CD8-positive, alpha-beta T cell (primary cell): ENCODE measurements at regions of chr11 and their contacts with region 1.

Region 1: GRCh38 chr11:130069684-130070108 is at the start of gene APLP2:
- DNase-seq: peak; percentile 94 to 99 (median 97)
- ATAC-seq: peak; percentile 93
- H3K4me3 ChIP-seq: peak within 1 kb of the TSS; percentile 77 to 88
- H3K4me3 Mint-ChIP-seq: peak within 1 kb of the TSS; percentile 97
- H3K27ac ChIP-seq: peak within 1 kb of the TSS; percentile 74 to 80
- H3K27ac Mint-ChIP-seq: peak within 1 kb of the TSS; percentile 95
- H3K4me1 ChIP-seq: peaks cover 17% of the 10 kb centered on the region
- H3K4me1 Mint-ChIP-seq: peaks cover 18% of the 10 kb centered on the region
- H3K27me3 ChIP-seq: no peaks in the 10 kb centered on the region
- H3K27me3 Mint-ChIP-seq: peaks cover 4% of the 10 kb centered on the region
- CTCF ChIP-seq: no peak
- total RNA-seq, gene APLP2: 23.2 to 24.7 TPM

Region 2: DNA sequence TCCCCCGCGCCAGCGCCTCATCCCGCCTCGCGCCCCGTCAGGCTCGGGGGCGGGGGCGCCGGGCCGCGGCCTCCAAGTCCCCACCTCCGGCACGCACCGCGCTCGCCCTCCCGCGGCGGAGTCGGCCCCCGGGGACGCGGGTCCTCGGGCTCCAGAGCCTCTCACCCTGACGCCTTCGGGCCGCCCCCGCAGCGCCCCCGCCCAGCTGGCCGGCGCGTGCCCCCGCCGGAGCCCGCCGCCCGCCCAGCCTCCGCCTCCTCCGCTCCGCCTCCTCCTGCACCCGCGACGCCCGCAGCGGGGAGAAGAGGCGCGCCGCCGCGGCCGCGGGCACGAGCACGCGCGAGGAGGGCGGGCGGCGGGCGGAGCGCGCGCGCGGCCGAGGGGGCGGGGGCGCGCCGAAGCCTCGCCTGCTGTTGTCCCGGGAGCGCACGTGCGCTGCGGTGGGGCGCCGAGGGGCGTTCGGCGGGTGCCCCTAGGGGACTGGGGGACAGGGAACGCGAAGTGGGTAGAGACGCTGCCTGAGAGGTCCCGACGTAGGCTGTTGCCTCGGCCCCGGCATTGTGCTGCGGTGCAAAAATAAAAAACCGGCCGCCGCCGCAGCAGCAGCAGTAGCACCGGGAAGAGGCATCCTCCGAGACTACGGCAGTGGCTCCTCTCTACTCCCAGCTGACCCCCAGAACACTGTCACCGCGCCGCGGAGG is 790.2 kb before region 1 on chr11:
- CTCF ChIA-PET with region 1: no interaction called
- POLR2A ChIA-PET with region 1: no interaction called
- intact Hi-C with region 1: loop called in 1 of 2 experiments (anchors 10 kb)
- DNase-seq: peak; percentile 48 to 88 (median 75)
- ATAC-seq: peak; percentile 78
- H3K4me3 ChIP-seq: peak overlapping the region; percentile 62 to 64
- H3K4me3 Mint-ChIP-seq: peak overlapping the region; percentile 72
- H3K27ac ChIP-seq: peak overlapping the region in 1 of 2 experiments; percentile 46
- H3K27ac Mint-ChIP-seq: peak overlapping the region; percentile 49
- H3K4me1 ChIP-seq: peaks cover 14% of the 10 kb centered on the region
- H3K4me1 Mint-ChIP-seq: peaks cover 29% of the 10 kb centered on the region
- H3K27me3 ChIP-seq: peaks cover 0 to 5% of the 10 kb centered on the region in 2 experiments
- H3K27me3 Mint-ChIP-seq: peaks cover 15% of the 10 kb centered on the region
- CTCF ChIP-seq: no peak

Region 3: DNA sequence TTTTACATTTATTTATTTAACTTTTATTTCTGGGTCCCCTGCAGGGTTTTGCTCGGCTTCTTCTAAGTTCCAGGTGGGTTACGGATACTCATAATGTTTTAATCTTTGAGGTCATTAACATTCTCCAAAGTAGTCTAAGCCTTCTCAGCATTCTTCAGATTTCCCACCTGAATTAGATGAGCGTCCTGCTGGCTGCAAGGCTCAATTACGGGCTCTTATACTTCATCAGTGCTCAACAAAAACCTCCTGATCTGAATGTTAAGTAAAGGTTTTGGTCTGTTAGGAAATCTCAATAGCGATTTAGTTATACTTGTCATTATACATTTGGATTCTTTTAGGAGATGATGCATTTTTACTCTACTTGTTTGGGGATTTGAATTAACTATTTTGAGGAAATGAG is 147.0 kb before region 1 on chr11:
- CTCF ChIA-PET with region 1: interaction called, 3 read pairs
- POLR2A ChIA-PET with region 1: no interaction called
- intact Hi-C with region 1: loop called in 1 of 2 experiments (anchors 1 kb)
- DNase-seq: no peak
- ATAC-seq: no peak
- H3K4me3 ChIP-seq: no peak overlapping the region
- H3K4me3 Mint-ChIP-seq: no peak overlapping the region
- H3K27ac ChIP-seq: no peak overlapping the region
- H3K27ac Mint-ChIP-seq: no peak overlapping the region
- H3K4me1 ChIP-seq: peaks cover 5% of the 10 kb centered on the region
- H3K4me1 Mint-ChIP-seq: peaks cover 6% of the 10 kb centered on the region
- H3K27me3 ChIP-seq: peaks cover 0 to 3% of the 10 kb centered on the region in 2 experiments
- H3K27me3 Mint-ChIP-seq: no peaks in the 10 kb centered on the region
- CTCF ChIP-seq: no peak

Region 4: GRCh38 chr11:130002846-130003716 is 66.6 kb before region 1 on chr11:
- CTCF ChIA-PET with region 1: interaction called, 9 read pairs
- POLR2A ChIA-PET with region 1: interaction called, 25 read pairs
- intact Hi-C with region 1: loop called (anchors 1 kb)
- DNase-seq: peak; percentile 82 to 96 (median 89)
- ATAC-seq: peak; percentile 77
- H3K4me3 ChIP-seq: peak overlapping the region; percentile 69 to 71
- H3K4me3 Mint-ChIP-seq: peak overlapping the region; percentile 99
- H3K27ac ChIP-seq: peak overlapping the region; percentile 99 to 100
- H3K27ac Mint-ChIP-seq: peak overlapping the region; percentile 100
- H3K4me1 ChIP-seq: peaks cover 24% of the 10 kb centered on the region
- H3K4me1 Mint-ChIP-seq: peaks cover 37% of the 10 kb centered on the region
- H3K27me3 ChIP-seq: no peaks in the 10 kb centered on the region
- H3K27me3 Mint-ChIP-seq: no peaks in the 10 kb centered on the region
- CTCF ChIP-seq: no peak